ENCODE measurements at regions of chr2 and their contacts with region 1.

Region 1: GRCh38 chr2:213284105-213285090 is at the start of gene SPAG16:
- DNase-seq: peak; percentile 89 to 98 (median 95)
- ATAC-seq: peak; percentile 97
- H3K4me3 ChIP-seq: peak within 1 kb of the TSS; percentile 81 to 84
- H3K4me3 Mint-ChIP-seq: peak within 1 kb of the TSS; percentile 94
- H3K27ac ChIP-seq: peak within 1 kb of the TSS; percentile 39 to 74
- H3K27ac Mint-ChIP-seq: peak within 1 kb of the TSS; percentile 95
- H3K4me1 ChIP-seq: peaks cover 11% of the 10 kb centered on the region
- H3K4me1 Mint-ChIP-seq: peaks cover 47% of the 10 kb centered on the region
- H3K27me3 ChIP-seq: no peaks in the 10 kb centered on the region
- H3K27me3 Mint-ChIP-seq: no peaks in the 10 kb centered on the region
- CTCF ChIP-seq: no peak
- total RNA-seq, gene SPAG16: 3.7 to 4.6 TPM

Region 2: GRCh38 chr2:212953170-212953569 is 331.2 kb before region 1 on chr2:
- CTCF ChIA-PET with region 1: no interaction called
- POLR2A ChIA-PET with region 1: no interaction called
- intact Hi-C with region 1: no loop called
- DNase-seq: peak in 1 of 9 experiments; percentile 14
- ATAC-seq: no peak
- H3K4me3 ChIP-seq: no peak overlapping the region
- H3K4me3 Mint-ChIP-seq: no peak overlapping the region
- H3K27ac ChIP-seq: no peak overlapping the region
- H3K27ac Mint-ChIP-seq: peak overlapping the region; percentile 2
- H3K4me1 ChIP-seq: peaks cover 3% of the 10 kb centered on the region
- H3K4me1 Mint-ChIP-seq: peaks cover 24% of the 10 kb centered on the region
- H3K27me3 ChIP-seq: no peaks in the 10 kb centered on the region
- H3K27me3 Mint-ChIP-seq: no peaks in the 10 kb centered on the region
- CTCF ChIP-seq: no peak

Region 3: DNA sequence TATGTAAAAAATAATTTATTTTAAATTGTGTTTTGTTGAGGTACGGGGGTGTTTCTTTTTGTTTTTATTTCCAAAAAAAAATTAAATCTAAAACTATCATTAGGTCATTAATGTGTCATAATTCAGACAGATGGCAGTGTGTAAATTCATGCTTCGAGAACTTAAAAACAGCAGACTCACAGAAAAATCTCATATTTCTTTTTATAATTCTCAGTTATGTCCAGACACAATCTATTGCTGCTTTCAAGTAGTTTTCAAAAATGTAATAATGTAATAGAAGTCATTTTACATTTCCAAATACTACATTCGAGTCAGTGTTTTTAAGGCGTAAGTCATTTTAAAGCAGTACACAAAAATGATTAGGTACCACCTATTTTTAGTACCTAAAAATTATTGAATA is 147.3 kb before region 1 on chr2:
- CTCF ChIA-PET with region 1: no interaction called
- POLR2A ChIA-PET with region 1: no interaction called
- intact Hi-C with region 1: no loop called
- DNase-seq: no peak
- ATAC-seq: no peak
- H3K4me3 ChIP-seq: no peak overlapping the region
- H3K4me3 Mint-ChIP-seq: no peak overlapping the region
- H3K27ac ChIP-seq: peak overlapping the region in 1 of 2 experiments; percentile 18
- H3K27ac Mint-ChIP-seq: no peak overlapping the region
- H3K4me1 ChIP-seq: no peaks in the 10 kb centered on the region
- H3K4me1 Mint-ChIP-seq: peaks cover 41% of the 10 kb centered on the region
- H3K27me3 ChIP-seq: no peaks in the 10 kb centered on the region
- H3K27me3 Mint-ChIP-seq: no peaks in the 10 kb centered on the region
- CTCF ChIP-seq: no peak

Region 4: GRCh38 chr2:213157242-213157641 is 127.2 kb before region 1 on chr2:
- CTCF ChIA-PET with region 1: interaction called, 5 read pairs
- POLR2A ChIA-PET with region 1: no interaction called
- intact Hi-C with region 1: loop called (anchors 2 to 5 kb)
- DNase-seq: peak in 3 of 9 experiments; percentile 42 to 73 (median 51)
- ATAC-seq: peak; percentile 75
- H3K4me3 ChIP-seq: no peak overlapping the region
- H3K4me3 Mint-ChIP-seq: no peak overlapping the region
- H3K27ac ChIP-seq: no peak overlapping the region
- H3K27ac Mint-ChIP-seq: peak overlapping the region; percentile 11
- H3K4me1 ChIP-seq: peaks cover 11% of the 10 kb centered on the region
- H3K4me1 Mint-ChIP-seq: peaks cover 19% of the 10 kb centered on the region
- H3K27me3 ChIP-seq: no peaks in the 10 kb centered on the region
- H3K27me3 Mint-ChIP-seq: no peaks in the 10 kb centered on the region
- CTCF ChIP-seq: no peak

Region 5: DNA sequence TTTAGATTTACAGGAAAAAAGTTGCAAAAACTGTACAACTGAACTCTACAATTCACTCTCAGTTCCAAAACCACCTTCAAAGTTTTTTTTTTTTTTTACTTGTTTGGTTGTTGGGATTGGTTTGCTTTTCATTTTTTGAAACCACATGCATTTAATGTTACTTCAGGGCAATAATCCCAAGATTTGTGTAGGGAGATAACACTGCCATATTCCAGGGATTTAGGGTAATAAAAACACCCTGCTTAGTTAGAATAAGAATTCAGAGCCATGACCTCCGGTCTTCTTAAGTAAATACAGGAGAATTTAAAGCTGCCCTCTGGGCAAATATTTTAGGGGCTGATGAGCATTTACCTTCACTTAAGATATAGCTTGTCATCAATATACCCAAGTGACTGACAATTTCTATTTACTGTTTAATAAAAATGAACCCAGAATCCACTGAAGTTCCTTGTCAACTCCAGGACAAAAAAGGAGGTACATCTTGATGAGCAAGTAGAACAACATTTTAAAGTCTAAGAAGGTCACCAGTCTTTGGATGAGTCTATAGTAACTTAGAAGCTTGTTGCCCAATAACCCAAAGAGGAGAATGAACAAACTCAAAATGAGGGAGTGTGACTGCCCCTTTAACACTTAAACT is 108.8 kb before region 1 on chr2:
- CTCF ChIA-PET with region 1: no interaction called
- POLR2A ChIA-PET with region 1: no interaction called
- intact Hi-C with region 1: no loop called
- DNase-seq: no peak
- ATAC-seq: no peak
- H3K4me3 ChIP-seq: no peak overlapping the region
- H3K4me3 Mint-ChIP-seq: no peak overlapping the region
- H3K27ac ChIP-seq: no peak overlapping the region
- H3K27ac Mint-ChIP-seq: no peak overlapping the region
- H3K4me1 ChIP-seq: no peaks in the 10 kb centered on the region
- H3K4me1 Mint-ChIP-seq: no peaks in the 10 kb centered on the region
- H3K27me3 ChIP-seq: no peaks in the 10 kb centered on the region
- H3K27me3 Mint-ChIP-seq: no peaks in the 10 kb centered on the region
- CTCF ChIP-seq: no peak

Region 6: DNA sequence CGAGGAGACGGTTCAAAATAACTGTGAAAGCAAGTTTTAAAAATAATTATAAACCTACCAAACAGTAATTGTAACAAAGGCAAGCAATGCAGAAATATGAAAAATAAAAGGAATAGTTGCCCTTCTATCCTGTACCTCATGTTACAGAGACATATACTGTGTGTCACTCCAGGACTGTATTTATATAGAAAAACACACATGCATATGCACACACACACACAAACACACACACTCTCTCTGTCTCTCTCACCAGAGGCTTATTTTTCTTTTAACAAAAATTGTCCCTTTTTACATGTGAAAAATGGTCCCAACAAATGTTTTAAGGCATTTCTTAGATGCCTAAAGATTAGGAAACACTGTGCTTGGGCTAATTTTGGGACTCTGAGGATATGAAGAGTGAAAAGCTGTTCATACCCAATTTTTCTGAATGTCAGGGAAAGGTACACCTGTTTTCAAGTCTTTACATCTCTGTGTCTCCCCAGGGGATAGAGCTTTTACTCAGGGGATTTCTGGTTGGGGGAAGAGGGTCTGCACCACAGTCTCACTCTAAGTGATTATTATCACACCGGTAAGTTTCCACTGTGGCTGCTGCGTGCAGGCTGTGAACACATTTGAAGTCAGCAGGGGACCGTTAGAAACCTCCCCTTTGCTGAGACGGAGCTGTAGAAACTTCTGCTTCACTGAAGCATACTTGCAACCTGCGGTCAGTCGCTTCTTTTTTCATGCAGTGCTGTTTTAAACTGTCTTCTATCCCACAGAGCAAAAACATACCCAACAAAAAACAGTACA is 51.6 kb before region 1 on chr2:
- CTCF ChIA-PET with region 1: no interaction called
- POLR2A ChIA-PET with region 1: no interaction called
- intact Hi-C with region 1: loop called in 1 of 2 experiments (anchors 5 kb)
- DNase-seq: peak in 8 of 9 experiments; percentile 21 to 82 (median 62)
- ATAC-seq: peak; percentile 89
- H3K4me3 ChIP-seq: no peak overlapping the region
- H3K4me3 Mint-ChIP-seq: peak overlapping the region; percentile 32
- H3K27ac ChIP-seq: peak overlapping the region in 1 of 2 experiments; percentile 42
- H3K27ac Mint-ChIP-seq: peak overlapping the region; percentile 87
- H3K4me1 ChIP-seq: peaks cover 9% of the 10 kb centered on the region
- H3K4me1 Mint-ChIP-seq: peaks cover 34% of the 10 kb centered on the region
- H3K27me3 ChIP-seq: no peaks in the 10 kb centered on the region
- H3K27me3 Mint-ChIP-seq: peaks cover 1% of the 10 kb centered on the region
- CTCF ChIP-seq: no peak

Region 7: GRCh38 chr2:213261771-213262170 is 22.6 kb before region 1 on chr2:
- CTCF ChIA-PET with region 1: no interaction called
- POLR2A ChIA-PET with region 1: no interaction called
- intact Hi-C with region 1: no loop called
- DNase-seq: no peak
- ATAC-seq: no peak
- H3K4me3 ChIP-seq: no peak overlapping the region
- H3K4me3 Mint-ChIP-seq: no peak overlapping the region
- H3K27ac ChIP-seq: no peak overlapping the region
- H3K27ac Mint-ChIP-seq: no peak overlapping the region
- H3K4me1 ChIP-seq: no peaks in the 10 kb centered on the region
- H3K4me1 Mint-ChIP-seq: no peaks in the 10 kb centered on the region
- H3K27me3 ChIP-seq: no peaks in the 10 kb centered on the region
- H3K27me3 Mint-ChIP-seq: peaks cover under 1% of the 10 kb centered on the region
- CTCF ChIP-seq: no peak

Region 8: DNA sequence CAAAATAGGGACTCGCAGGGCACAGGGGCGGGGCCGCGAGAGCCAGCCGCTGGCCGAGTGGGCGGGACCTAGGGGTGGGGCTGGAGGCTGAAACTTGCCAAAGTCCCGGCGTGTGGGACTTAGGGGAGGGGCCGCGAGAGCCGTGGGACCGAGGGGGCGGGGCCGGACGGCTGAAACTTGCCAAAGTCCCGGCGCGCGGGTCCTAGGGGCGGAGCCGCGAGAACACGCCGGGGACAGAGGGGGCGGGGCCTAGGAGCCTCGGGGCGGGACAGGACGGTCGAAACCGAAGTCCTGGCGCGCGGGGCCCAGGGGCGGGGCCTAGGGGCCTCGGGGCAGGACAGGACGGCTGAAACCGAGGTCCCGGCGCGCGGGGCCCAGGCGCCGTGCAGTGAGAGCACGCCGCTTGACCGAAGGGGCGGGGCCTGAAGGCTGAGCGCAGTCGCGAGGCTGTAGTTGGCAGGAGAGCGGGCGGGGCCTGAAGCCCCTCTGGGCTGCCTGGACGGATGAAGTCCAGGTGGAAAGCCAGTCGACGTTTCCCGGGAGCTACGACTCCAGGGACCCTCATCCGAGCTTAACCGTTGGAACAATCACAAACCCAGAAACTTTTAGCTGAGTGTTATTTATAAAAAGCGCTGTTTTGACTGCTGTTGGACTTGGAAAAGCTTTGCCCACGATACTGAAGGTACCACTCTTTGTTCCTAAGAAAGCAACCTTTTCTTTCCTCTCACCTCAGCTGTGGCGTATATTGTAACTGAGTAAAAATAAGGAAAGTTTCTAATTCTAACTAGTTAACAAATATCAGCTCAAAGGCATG is 1525.6 kb after region 1 on chr2:
- CTCF ChIA-PET with region 1: no interaction called
- POLR2A ChIA-PET with region 1: interaction called, 7 read pairs
- intact Hi-C with region 1: loop called (anchors 1 to 2 kb)
- DNase-seq: peak; percentile 90 to 98 (median 97)
- ATAC-seq: peak; percentile 79
- H3K4me3 ChIP-seq: peak overlapping the region; percentile 88 to 98
- H3K4me3 Mint-ChIP-seq: peak overlapping the region; percentile 99
- H3K27ac ChIP-seq: peak overlapping the region; percentile 50 to 78
- H3K27ac Mint-ChIP-seq: peak overlapping the region; percentile 72
- H3K4me1 ChIP-seq: peaks cover 17% of the 10 kb centered on the region
- H3K4me1 Mint-ChIP-seq: peaks cover 33% of the 10 kb centered on the region
- H3K27me3 ChIP-seq: no peaks in the 10 kb centered on the region
- H3K27me3 Mint-ChIP-seq: no peaks in the 10 kb centered on the region
- CTCF ChIP-seq: no peak

Measured in CD8-positive, alpha-beta T cell (primary cell).